Activated B cell treated with CpG ODN at 0.5 μM for 24 hours (primary cell): ENCODE measurements at regions of chr19 and their contacts with region 1.

Region 1: GRCh38 chr19:36687214-36688056 is at the start of gene ZNF567:
- DNase-seq: peak; percentile 95
- ATAC-seq: peak; percentile 93
- H3K4me3 Mint-ChIP-seq: peak within 1 kb of the TSS; percentile 98
- H3K27ac Mint-ChIP-seq: peak within 1 kb of the TSS; percentile 89
- H3K4me1 Mint-ChIP-seq: peaks cover 34% of the 10 kb centered on the region
- H3K27me3 Mint-ChIP-seq: no peaks in the 10 kb centered on the region
- CTCF ChIP-seq: no peak
- total RNA-seq, gene ZNF567: 13.3 and 15.0 TPM in 2 replicates

Region 2: GRCh38 chr19:36573020-36573885 is 114.2 kb before region 1 on chr19 and contains the start of gene ZNF529:
- CTCF ChIA-PET with region 1: no interaction called
- POLR2A ChIA-PET with region 1: interaction called, 7 read pairs
- intact Hi-C with region 1: loop called (anchors 1 kb)
- DNase-seq: peak; percentile 79
- ATAC-seq: peak; percentile 91
- H3K4me3 Mint-ChIP-seq: peak within 1 kb of the TSS; percentile 89
- H3K27ac Mint-ChIP-seq: peak within 1 kb of the TSS; percentile 86
- H3K4me1 Mint-ChIP-seq: peaks cover 33% of the 10 kb centered on the region
- H3K27me3 Mint-ChIP-seq: no peaks in the 10 kb centered on the region
- CTCF ChIP-seq: no peak
- total RNA-seq, gene ZNF529: 21.9 and 23.6 TPM in 2 replicates

Region 3: DNA sequence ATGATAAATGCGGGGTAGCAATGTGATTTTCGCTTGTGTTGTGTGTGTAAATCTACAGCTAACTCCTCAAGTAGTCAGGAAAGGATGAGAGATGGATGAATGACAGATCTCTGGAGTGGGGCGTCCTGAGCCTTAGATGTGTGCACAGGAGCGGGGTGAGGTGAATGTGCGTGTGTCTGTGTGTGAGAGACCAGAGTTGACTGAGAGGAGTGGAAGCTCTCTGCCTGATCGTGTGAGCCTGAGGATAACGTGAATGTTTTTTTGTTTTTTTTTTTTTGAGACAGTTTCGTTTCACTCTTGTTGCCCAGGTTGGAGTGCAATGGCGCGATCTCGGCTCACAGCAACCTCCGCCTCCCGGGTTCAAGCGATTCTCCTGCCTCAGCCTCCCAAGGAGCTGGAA is 21.6 kb before region 1 on chr19:
- CTCF ChIA-PET with region 1: no interaction called
- POLR2A ChIA-PET with region 1: interaction called, 3 read pairs
- intact Hi-C with region 1: loop called (anchors 1 kb)
- DNase-seq: no peak
- ATAC-seq: no peak
- H3K4me3 Mint-ChIP-seq: peak overlapping the region; percentile 98
- H3K27ac Mint-ChIP-seq: peak overlapping the region; percentile 72
- H3K4me1 Mint-ChIP-seq: peaks cover 31% of the 10 kb centered on the region
- H3K27me3 Mint-ChIP-seq: no peaks in the 10 kb centered on the region
- CTCF ChIP-seq: no peak

Region 4: DNA sequence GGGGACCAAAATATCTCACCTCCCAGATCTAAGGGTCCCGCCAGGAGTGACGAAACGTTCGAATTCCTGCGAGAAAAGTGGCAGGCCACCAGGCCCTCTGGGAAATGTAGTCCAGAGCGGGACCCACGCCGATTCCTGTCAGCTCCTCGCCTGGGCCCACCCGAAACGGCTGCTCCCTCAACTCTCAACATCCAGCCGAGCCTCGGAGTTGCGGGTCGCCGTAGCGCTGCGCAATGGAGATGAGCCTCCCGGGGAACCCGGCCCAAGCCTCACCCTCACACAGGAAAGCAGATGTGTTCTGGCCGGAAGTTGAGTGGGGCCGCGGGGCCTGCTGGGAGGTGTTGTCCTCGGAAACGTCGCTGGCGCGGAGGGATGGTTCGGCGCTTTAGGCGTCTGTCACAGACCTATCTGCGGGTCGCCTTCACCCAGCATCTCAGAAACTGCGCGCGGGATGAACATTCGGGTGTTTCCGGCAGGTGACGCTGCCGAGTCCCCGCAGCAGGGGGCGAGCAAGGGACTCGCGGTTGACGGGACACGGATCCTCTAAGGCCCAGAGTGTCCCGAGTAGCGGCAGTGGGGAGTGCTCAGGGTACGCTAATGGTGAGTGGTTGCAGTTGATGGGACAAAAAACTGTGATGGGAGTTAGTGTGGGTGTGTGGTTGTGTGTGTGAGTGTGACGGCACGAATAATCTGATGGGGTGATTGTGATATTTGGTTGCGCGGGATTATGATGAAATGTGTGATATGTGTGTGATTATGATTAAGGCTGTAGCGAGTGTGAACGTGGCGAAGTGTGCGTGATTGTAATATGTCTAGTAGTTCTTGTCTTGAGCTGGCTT is 228.8 kb after region 1 on chr19 and contains the starts of genes ZNF568 and ZNF829:
- CTCF ChIA-PET with region 1: no interaction called
- POLR2A ChIA-PET with region 1: no interaction called
- intact Hi-C with region 1: loop called (anchors 1 kb)
- DNase-seq: peak; percentile 87
- ATAC-seq: peak; percentile 93
- H3K4me3 Mint-ChIP-seq: peak within 1 kb of the TSS; percentile 91
- H3K27ac Mint-ChIP-seq: peak within 1 kb of the TSS; percentile 91
- H3K4me1 Mint-ChIP-seq: peaks cover 26% of the 10 kb centered on the region
- H3K27me3 Mint-ChIP-seq: no peaks in the 10 kb centered on the region
- CTCF ChIP-seq: no peak
- total RNA-seq, gene ZNF568: 12.0 and 13.4 TPM in 2 replicates
- total RNA-seq, gene ZNF829: 7.3 and 7.6 TPM in 2 replicates

Region 5: GRCh38 chr19:37217855-37218591 is 530.6 kb after region 1 on chr19 and contains the start of gene ZNF383:
- CTCF ChIA-PET with region 1: no interaction called
- POLR2A ChIA-PET with region 1: no interaction called
- intact Hi-C with region 1: loop called (anchors 10 kb)
- DNase-seq: peak; percentile 81
- ATAC-seq: peak; percentile 89
- H3K4me3 Mint-ChIP-seq: peak within 1 kb of the TSS; percentile 98
- H3K27ac Mint-ChIP-seq: peak within 1 kb of the TSS; percentile 99
- H3K4me1 Mint-ChIP-seq: peaks cover 26% of the 10 kb centered on the region
- H3K27me3 Mint-ChIP-seq: no peaks in the 10 kb centered on the region
- CTCF ChIP-seq: no peak
- total RNA-seq, gene ZNF383: 19.9 and 25.5 TPM in 2 replicates